Activated CD4-positive, alpha-beta T cell treated with anti-CD3 and anti-CD28 coated beads for 36 hours (primary cell): ENCODE measurements at regions of chr6 and their contacts with region 1.

Region 1: DNA sequence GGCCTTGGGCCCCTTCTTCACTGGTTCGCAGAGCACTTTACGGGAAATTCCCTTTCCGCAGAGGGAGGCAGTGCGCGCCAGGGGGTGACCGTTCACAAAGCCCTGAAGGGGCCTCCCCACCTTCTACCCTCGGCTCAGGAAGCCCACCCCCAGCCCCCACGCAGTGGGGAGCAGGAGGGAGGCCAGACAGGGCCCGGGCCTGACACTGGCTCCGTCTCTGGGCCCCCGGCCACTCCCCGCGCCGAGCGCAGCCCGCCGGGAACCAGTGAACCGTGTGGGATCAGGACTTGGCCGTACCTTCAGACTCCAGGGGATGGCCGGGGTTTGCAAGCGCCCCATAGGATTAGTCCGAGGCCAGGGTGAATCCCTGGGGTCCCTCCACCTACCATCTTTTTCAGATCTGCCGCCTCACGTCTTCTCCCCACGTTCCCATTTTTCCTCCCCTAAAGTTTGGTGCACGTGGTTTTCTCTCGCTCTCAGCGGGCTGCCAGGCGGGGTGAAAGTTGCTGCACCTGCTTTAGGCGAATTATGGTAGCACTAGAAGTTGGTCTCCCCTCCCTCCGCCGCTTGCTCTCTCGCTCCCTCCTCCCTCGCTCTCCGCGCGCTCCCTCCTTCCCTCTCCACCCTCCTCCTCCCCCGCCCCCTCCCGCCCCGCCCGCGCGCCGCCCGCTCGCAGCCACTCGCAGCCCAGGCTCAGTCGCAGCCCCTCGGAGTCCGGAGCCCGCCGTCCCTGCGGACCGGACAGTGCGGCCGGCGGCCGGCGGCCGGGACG is at the start of gene FOXP4:
- DNase-seq: peak; percentile 92
- ATAC-seq: peak; percentile 84
- H3K4me3 Mint-ChIP-seq: peak within 1 kb of the TSS; percentile 84
- H3K27ac Mint-ChIP-seq: peak within 1 kb of the TSS; percentile 92
- H3K4me1 Mint-ChIP-seq: peaks cover 15% of the 10 kb centered on the region
- H3K27me3 Mint-ChIP-seq: peaks cover 6% of the 10 kb centered on the region
- total RNA-seq, gene FOXP4: 11.1 to 13.8 TPM

Region 2: DNA sequence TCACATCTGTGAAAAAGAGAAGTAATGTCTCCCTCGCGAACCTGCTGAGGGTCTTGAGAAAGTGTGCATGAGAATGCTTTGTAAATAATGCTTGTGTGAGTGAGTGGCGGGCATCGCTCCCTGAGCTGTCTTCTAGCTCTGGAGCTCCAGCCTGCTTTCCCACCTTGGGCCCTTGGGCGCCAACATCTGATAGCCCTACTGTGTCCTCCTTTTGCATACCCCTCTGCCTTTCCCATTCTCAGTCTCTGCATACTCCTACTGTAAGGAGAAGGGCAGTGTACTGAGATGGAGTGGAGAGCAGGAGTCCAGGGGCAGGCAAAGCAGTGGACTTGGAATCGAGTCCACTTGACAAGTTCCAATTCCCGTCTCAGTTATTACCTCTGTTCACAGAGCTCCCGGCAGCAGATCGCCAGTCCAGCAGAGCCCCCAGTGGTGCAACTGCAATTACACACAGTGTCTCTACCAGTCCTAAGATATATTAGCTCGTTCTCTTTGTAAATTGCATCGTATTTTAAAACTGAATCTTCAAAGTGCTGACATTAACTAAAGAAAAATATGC is 211.3 kb before region 1 on chr6:
- CTCF ChIA-PET with region 1: no interaction called
- POLR2A ChIA-PET with region 1: no interaction called
- intact Hi-C with region 1: no loop called
- DNase-seq: no peak
- ATAC-seq: peak; percentile 5
- H3K4me3 Mint-ChIP-seq: no peak overlapping the region
- H3K27ac Mint-ChIP-seq: peak overlapping the region; percentile 73
- H3K4me1 Mint-ChIP-seq: peaks cover 33% of the 10 kb centered on the region
- H3K27me3 Mint-ChIP-seq: no peaks in the 10 kb centered on the region

Region 3: GRCh38 chr6:41560431-41561192 is 14.7 kb after region 1 on chr6:
- CTCF ChIA-PET with region 1: no interaction called
- POLR2A ChIA-PET with region 1: no interaction called
- intact Hi-C with region 1: loop called (anchors 1 to 2 kb)
- DNase-seq: peak; percentile 90
- ATAC-seq: peak; percentile 93
- H3K4me3 Mint-ChIP-seq: peak overlapping the region; percentile 79
- H3K27ac Mint-ChIP-seq: peak overlapping the region; percentile 82
- H3K4me1 Mint-ChIP-seq: peaks cover 18% of the 10 kb centered on the region
- H3K27me3 Mint-ChIP-seq: no peaks in the 10 kb centered on the region

Region 4: GRCh38 chr6:41571021-41571780 is 25.3 kb after region 1 on chr6:
- CTCF ChIA-PET with region 1: no interaction called
- POLR2A ChIA-PET with region 1: no interaction called
- intact Hi-C with region 1: no loop called
- DNase-seq: peak; percentile 57
- ATAC-seq: peak; percentile 71
- H3K4me3 Mint-ChIP-seq: no peak overlapping the region
- H3K27ac Mint-ChIP-seq: peak overlapping the region; percentile 13
- H3K4me1 Mint-ChIP-seq: peaks cover 14% of the 10 kb centered on the region
- H3K27me3 Mint-ChIP-seq: no peaks in the 10 kb centered on the region

Region 5: GRCh38 chr6:43170417-43171283 is 1624.8 kb after region 1 on chr6 and contains the start of gene SRF:
- CTCF ChIA-PET with region 1: no interaction called
- POLR2A ChIA-PET with region 1: no interaction called
- intact Hi-C with region 1: no loop called
- DNase-seq: peak; percentile 99
- ATAC-seq: peak; percentile 75
- H3K4me3 Mint-ChIP-seq: peak within 1 kb of the TSS; percentile 85
- H3K27ac Mint-ChIP-seq: peak within 1 kb of the TSS; percentile 91
- H3K4me1 Mint-ChIP-seq: peaks cover 34% of the 10 kb centered on the region
- H3K27me3 Mint-ChIP-seq: no peaks in the 10 kb centered on the region
- total RNA-seq, gene SRF: 37.6 to 38.5 TPM